Endothelial cell of umbilical vein (primary cell): ENCODE measurements at regions of chr7 and their contacts with region 1.

Region 1: DNA sequence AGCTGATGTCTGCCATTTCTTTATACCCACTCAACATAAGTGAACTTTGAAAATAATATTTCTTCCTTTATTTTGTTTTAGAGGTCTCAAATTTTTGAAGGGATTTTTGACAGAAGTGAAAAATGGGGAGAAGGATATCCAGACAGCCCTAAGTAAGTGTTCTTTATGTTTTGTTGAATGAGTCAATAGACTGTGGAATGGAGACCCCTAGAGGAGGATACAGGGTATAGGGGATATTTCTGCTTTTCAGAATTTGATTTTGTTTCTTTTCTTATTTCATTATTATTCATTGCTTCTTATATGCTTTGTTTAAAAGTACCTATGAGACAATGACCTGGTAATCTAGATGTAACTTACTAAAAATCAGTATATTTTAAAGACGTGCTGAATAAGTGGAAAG is 34.4 kb downstream of the PLEKHA8 start:
- DNase-seq: peak; percentile 42
- H3K4me3 ChIP-seq: no peak overlapping the region
- H3K27ac ChIP-seq: no peak overlapping the region
- H3K4me1 ChIP-seq: no peaks in the 10 kb centered on the region
- H3K27me3 ChIP-seq: no peaks in the 10 kb centered on the region
- CTCF ChIP-seq: peak; percentile 39 to 50
- POLR2A ChIP-seq: no peak

Region 2: GRCh38 chr7:29878081-29878688 is 184.4 kb before region 1 on chr7:
- CTCF ChIA-PET with region 1: interaction called, 75 read pairs
- POLR2A ChIA-PET with region 1: no interaction called
- dilution Hi-C with region 1: no loop called
- intact Hi-C with region 1: loop called (anchors 1 kb)
- DNase-seq: peak; percentile 74
- H3K4me3 ChIP-seq: no peak overlapping the region
- H3K27ac ChIP-seq: no peak overlapping the region
- H3K4me1 ChIP-seq: peaks cover 2% of the 10 kb centered on the region
- H3K27me3 ChIP-seq: peaks cover 5% of the 10 kb centered on the region in 2 experiments
- CTCF ChIP-seq: peak; percentile 50 to 58
- POLR2A ChIP-seq: no peak

Region 3: DNA sequence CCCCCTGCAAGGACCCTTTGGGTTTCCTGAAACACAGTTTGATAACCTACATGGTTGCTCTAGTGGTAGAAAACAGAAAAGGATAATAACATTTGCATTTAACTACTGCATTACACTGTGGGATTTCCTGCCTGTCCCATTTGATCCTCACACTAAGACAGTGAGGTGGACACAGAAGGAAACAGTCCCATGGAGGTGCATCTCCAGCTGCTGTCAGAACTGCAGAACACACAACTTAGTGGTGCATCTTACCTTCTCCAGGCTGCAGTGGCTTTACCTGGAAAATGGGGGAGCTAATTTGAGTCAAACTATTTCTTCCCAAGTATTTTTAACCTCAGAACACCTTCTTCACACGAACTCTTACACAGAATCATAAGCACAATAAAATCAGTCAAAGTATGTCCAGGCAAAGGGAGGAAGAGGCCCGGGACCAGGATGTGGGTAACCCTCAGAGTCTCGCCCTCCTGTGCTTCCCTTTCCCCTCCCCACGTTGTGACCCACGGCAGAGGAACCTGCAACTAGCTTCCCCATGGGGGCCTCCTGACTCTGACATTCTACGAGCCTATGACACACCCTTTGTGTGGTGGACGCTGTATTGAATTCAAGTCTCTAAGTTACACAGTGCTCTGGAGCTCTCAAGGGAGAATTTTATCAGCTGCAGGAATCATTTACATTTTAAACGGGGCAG is 106.6 kb before region 1 on chr7:
- CTCF ChIA-PET with region 1: interaction called, 18 read pairs
- POLR2A ChIA-PET with region 1: no interaction called
- dilution Hi-C with region 1: no loop called
- intact Hi-C with region 1: no loop called
- DNase-seq: no peak
- H3K4me3 ChIP-seq: no peak overlapping the region
- H3K27ac ChIP-seq: no peak overlapping the region
- H3K4me1 ChIP-seq: no peaks in the 10 kb centered on the region
- H3K27me3 ChIP-seq: no peaks in the 10 kb centered on the region
- CTCF ChIP-seq: no peak
- POLR2A ChIP-seq: no peak

Region 4: DNA sequence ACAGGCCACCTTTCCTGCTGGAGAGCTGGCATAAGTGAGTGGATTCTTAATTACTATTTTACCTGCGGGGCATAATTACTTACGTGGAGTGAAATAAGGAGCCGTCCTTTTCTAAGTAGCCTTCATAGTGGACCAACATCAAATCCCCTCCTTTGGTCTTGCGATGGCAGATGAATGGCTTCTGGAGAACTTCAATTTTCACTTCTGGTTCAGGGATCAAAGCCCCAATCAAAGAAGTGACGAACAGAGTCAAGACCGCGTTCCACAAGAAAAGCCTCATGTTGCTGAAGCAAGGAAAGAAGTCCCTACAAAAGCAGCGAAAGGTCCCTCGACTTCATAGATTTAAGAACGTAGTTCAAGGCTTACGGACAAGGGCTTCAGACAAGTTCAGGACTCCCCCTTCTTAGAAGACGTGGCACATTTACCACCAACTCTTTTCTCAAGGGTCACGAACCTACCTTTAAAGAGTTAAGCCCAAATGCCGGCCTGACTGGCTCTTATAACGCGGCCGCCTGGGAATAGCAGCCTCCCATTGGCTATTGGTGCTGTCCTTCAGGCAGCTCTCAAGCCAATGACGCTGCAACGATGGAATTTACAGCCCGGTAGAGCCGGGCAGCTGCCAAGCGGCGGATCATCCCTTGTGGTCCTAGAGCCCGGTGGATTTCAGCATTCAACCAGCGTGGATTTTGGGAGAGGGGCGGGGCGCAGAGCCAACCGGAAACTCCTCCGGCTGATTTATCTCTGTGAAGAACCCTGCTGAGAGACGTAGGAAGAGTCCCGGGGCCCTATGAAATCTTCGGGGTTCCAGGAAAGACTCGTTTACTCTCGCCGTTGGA is 36.1 kb before region 1 on chr7 and contains the start of gene FKBP14:
- CTCF ChIA-PET with region 1: interaction called, 10 read pairs
- POLR2A ChIA-PET with region 1: no interaction called
- dilution Hi-C with region 1: no loop called
- intact Hi-C with region 1: loop called (anchors 5 kb)
- DNase-seq: peak; percentile 98
- H3K4me3 ChIP-seq: peak within 1 kb of the TSS; percentile 74 to 100 (median 99)
- H3K27ac ChIP-seq: peak within 1 kb of the TSS; percentile 83
- H3K4me1 ChIP-seq: peaks cover 35% of the 10 kb centered on the region
- H3K27me3 ChIP-seq: no peaks in the 10 kb centered on the region
- CTCF ChIP-seq: no peak
- POLR2A ChIP-seq: peak; percentile 79
- total RNA-seq, gene FKBP14: 37.4 and 37.6 TPM in 2 replicates

Region 5: DNA sequence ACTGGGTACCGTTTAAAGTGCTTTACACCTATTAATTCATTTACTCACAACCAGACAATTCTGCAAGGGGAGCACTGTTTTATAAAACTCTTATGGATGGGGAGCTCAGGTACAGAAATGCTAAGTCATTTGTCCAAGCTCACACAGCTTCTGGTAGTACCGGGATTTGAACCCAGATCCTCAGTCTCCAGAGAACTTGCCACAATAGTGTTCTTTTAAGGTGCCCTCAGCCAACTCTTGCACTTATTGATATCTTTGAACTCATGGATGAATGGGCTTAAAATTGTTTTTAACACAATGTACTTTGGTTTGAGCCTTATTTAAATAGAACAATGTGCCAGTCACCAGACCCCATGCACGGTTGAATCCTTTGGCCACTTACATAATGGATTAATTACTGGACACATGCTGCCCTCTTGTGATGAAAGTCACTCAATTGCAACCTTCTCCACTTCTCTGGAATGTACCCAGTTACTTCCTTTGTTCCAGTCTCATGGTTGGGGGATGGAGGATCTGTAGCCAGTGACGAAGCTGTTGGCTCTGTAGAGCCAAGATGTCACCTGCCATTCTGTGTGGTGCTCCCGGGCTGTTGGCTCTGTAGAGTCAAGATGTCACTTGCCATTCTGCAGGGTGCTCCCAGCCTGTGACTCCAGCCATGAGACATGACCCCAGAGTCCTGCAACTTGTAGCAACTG is 350.4 kb after region 1 on chr7:
- CTCF ChIA-PET with region 1: interaction called, 10 read pairs
- POLR2A ChIA-PET with region 1: no interaction called
- dilution Hi-C with region 1: no loop called
- intact Hi-C with region 1: loop called (anchors 1 kb)
- DNase-seq: peak; percentile 90
- H3K4me3 ChIP-seq: no peak overlapping the region
- H3K27ac ChIP-seq: no peak overlapping the region
- H3K4me1 ChIP-seq: no peaks in the 10 kb centered on the region
- H3K27me3 ChIP-seq: no peaks in the 10 kb centered on the region
- CTCF ChIP-seq: peak; percentile 57 to 62
- POLR2A ChIP-seq: no peak